Mucosa of descending colon (tissue), 3 donors: ENCODE measurements at regions of chr2 and their contacts with region 1.

Region 1: DNA sequence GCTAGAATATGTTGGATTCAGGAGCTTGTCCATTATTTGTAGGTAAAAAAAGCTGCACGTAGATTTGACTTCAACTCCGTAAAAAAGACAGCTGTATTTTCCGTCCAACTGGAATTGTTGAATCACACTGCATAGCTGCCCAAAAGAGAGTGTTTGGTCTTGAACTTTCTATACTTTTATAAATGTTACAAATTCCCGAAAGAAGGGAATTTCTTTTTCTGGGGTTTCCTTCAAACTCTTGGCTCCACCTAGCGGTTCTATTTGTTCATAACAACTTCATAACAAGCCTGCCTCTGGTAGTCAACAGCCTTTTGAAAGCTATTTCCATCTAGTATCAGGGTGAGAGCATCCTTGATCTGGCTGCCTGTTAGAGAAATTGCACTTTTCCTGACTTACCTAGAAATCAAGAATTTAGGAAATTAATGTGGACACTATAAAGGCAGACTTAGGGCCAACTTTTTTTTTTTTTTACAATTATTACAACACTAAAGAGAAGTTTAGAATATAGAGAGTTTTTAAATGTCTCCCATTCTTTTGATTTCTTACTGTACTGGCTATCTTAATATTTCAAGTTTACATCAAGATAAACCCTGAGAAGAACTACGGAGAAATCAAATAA is 48.1 kb downstream of the TMEM185B start:
- DNase-seq: peak in 1 of 3 donors; percentile 55
- ATAC-seq: peak; percentile 37
- H3K4me3 ChIP-seq: no peak overlapping the region
- H3K4me1 ChIP-seq: no peaks in the 10 kb centered on the region
- CTCF ChIP-seq: no peak

Region 2: DNA sequence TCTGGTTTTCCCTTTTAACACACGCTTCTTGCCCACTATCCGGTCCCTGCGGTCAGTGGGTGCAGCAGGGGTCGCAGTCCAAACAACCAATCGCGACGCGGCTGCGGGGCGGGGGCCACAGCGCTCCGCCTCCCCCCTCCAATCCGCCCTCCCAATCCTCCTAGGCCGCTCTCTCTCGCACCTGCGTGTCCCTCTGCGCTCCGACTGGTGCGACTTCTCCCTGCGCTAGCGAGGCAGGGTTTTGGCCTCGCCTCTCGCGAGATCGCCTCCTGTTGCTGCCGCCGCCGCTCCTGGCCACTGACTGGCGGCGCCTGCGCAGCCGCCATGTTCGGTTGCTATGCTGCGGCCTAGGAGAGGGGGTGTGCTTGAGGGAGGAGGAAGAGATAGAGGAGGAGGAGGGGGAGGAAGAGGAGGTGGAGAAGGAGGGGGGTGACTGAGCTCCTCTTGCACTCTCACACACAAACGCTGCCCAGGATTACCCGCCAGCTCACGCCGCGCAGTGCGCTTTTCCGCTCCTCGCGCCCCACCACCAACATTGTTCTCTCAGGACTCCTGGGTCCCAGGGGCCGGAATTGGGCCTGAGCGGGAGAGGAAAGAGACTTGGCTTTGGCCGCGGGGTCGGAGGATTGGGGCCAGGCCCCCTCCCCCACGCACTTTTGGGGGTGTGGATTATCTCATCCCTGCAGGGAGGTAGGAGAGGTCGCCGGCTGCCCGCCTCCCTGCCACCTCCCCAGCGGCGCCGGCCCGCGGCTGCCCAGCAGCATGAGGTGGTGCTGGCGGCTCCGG is 415.4 kb before region 1 on chr2 and contains the start of gene PTPN4:
- intact Hi-C with region 1: loop called in 1 of 2 experiments (anchors 10 kb)
- DNase-seq: peak; percentile 96 to 99 (median 98)
- ATAC-seq: peak; percentile 97
- H3K4me3 ChIP-seq: peak within 1 kb of the TSS; percentile 71
- H3K4me1 ChIP-seq: peaks cover 6% of the 10 kb centered on the region
- CTCF ChIP-seq: no peak
- total RNA-seq, gene PTPN4: 23.1 to 35.4 (median 30.1) TPM